Left cardiac atrium (tissue), 4 donors: ENCODE measurements at regions of chr16 and their contacts with region 1.

Region 1: GRCh38 chr16:48353565-48354163 is 31.5 kb downstream of the SIAH1 start:
- DNase-seq: peak; percentile 58
- ATAC-seq: peak; percentile 85 to 88

Region 2: GRCh38 chr16:46743238-46743719 is 1610.4 kb before region 1 on chr16:
- intact Hi-C with region 1: no loop called
- DNase-seq: peak; percentile 55
- ATAC-seq: peak in 1 of 2 donors; percentile 38

Region 3: DNA sequence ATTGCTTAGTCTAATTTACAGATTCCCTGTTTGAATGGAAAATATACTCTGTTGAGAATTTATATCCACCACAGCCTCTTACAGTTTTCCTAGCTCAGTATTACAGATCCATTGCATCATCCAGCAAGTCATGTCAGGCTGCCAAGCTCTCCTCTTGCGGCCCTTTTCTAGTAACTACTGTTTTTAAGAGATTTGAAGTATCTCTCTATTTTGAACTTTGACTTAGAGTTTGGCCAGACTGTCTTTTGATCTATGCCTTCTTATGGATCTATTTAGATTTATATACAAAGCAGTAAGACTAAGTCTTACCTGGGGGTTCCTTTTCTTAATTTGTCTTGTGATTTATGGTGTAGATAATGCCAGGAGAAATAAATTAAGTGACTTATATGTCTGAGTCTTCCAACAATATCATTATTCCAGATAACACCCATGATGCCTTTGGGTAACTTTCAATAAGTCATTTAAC is 53.2 kb before region 1 on chr16:
- intact Hi-C with region 1: no loop called
- DNase-seq: peak; percentile 38
- ATAC-seq: no peak

Region 4: DNA sequence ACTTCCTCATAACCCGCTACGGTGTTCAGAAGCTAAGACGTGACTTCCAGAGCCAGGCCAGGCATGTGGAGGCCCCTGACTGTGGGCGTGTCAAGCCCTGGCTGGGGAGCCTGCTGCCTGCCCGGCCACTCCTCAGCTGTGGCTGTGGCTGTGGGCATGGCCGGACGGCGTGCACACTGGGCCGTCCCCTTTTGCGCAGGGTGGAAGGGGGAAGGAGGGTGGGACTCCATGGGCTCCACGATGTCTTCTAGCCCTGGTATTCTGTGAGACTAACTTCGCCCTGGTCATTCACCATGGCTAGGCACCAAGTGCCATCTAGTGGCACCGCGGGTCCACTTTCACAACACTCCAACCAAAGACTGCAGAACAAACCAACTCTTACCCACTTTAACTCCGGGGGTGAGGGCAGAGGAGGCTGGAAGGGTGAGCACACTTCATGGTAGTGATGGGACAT is 188.4 kb after region 1 on chr16:
- intact Hi-C with region 1: loop called in 1 of 2 experiments (anchors 5 kb)
- DNase-seq: peak; percentile 53
- ATAC-seq: peak; percentile 70 to 72

Region 5: DNA sequence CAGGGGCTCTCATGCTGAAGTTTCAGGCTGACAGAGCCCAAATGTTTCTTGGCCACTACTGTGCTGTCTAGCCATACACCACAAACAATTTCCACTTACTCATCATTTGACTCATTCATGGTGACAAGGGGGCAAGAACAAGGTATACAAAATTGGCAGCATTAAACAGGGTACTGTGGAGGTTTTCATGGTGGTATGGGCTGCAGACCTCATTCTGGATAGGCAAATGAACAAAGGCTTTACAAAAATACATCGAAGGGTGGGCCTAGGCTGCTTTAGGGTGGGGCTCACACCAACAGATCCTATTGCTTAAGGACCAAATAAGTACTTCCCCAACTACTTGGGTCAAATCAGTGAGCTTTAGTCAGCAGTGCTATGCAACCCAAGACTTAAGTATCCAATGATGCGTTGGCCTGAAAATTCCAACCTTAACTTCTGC is 203.3 kb after region 1 on chr16:
- intact Hi-C with region 1: no loop called
- DNase-seq: no peak
- ATAC-seq: peak in 1 of 2 donors; percentile 63

Region 6: GRCh38 chr16:48592839-48593429 is 239.3 kb after region 1 on chr16:
- intact Hi-C with region 1: no loop called
- DNase-seq: no peak
- ATAC-seq: no peak